ACHN (cell line): ENCODE measurements at regions of chr10 and their contacts with region 1.

Region 1: DNA sequence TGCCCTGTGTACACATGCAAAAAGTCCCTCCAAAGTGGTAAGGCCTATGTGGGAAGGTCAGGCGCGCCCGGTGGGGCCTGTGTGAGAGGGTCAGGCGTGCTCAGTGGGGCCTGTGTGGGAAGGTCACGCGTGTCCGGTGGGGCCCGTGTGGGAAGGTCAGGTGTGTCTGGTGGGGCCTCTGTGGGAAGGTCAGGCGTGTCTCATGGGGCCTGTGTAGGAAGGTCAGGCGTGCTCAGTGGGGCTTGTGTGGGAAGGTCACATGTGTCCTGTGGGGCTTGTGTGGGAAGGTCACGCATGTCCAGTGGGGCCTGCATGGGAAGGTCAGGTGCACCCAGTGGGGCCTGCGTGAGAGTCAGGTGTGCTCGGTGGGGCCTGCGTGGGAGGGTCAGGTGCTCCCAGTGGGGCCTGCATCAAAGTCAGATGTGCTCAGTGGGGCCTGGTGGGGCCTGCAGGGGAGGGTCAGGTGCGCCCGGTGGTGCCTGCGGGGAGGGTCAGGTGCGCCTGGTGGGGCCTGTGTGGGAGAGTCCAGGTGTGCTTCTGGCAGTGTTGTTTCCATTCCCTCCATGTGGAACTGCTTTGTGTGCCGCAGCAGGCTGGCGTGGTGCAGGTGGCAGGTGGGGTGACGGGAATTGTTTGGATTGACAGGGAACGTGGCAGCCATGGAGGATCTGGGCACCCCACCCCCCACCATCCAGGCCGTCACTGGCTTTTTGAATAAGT is 15.4 kb downstream of the LRRC27 start:
- DNase-seq: no peak

Region 2: GRCh38 chr10:132229834-132230556 is 117.4 kb before region 1 on chr10:
- in situ Hi-C with region 1: loop called (anchors 10 kb)
- DNase-seq: no peak